Mucosa of descending colon (tissue), 3 donors: ENCODE measurements at regions of chr4 and their contacts with region 1.

Region 1: DNA sequence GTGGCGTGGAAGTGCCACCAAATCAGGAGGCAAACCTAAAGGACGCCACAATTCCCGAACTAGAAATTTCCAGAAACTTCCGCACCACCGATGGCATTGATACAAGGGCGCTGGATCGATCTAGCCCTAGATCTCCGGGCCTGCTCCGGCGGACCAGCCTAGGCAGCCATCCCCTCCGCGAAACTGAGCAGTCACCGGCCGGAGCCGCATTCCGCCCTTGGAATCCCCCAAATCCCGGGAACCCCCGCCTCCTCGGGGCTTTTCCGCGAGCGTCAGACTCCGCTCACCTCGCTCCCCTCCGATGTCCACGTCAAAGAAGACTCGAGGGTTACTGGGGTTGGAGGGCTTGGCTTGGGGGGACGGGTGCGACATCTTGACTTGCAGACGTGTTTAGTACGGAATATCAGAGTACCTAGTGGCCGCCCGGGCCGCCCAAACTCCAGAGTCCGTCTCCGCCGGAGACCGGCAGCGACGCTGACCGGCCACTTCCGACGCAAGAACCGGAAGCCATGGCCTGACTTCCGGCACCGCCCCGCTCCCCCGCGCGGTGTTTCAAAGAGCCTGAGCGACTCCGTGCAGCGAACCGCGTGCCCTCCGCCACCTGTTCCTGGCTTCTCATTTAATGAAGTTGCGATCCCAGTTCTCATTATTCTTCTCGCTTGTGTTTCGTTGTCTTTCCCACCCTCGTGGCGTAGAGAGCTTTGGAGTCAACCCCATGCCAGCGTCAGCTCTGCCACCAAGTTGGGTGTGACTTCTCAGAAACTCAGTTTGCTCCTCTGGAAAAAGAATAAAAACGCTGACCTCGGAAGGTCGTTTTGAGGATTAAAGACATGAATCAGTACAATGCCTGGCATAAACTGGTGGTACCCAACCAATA is at the start of gene PPID:
- DNase-seq: peak; percentile 92 to 93 (median 93)
- ATAC-seq: peak; percentile 99
- H3K4me3 ChIP-seq: peak within 1 kb of the TSS; percentile 78
- H3K4me1 ChIP-seq: no peaks in the 10 kb centered on the region
- CTCF ChIP-seq: no peak
- total RNA-seq, gene PPID: 19.7 to 23.9 (median 22.2) TPM

Region 2: DNA sequence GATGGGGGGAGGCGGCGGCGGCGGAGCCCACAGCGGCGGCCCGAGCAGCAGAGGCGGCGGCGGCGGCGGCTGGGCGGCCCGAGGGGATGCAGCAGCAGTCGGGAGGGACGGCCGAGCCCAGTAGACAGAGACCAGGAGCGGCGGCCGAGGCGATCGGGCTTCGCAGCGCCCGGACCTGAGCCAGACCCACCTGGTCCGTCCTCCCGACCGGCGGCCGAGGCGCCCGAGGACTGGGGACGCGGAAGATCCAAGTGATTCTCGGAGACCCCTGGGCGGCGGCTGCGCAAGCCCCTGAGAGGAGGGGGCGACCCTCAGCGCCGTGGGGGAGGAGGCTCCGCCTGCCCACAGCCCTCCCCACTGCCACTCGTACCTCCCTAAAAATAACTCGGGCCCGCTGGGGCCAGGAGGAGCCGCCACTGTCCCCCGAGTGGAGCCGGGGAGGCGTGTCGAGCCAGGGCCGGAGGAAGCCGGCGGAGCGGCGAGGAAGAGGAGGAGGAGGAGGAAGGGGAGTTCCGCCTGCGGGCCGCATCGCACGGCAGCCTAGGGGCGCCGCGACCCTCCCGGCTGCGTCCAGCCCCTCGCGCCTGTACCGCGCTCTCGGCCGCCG is 380.3 kb after region 1 on chr4:
- intact Hi-C with region 1: no loop called
- DNase-seq: peak; percentile 56 to 76 (median 75)
- ATAC-seq: peak; percentile 19
- H3K4me3 ChIP-seq: peak overlapping the region; percentile 79
- H3K4me1 ChIP-seq: peaks cover 22% of the 10 kb centered on the region
- CTCF ChIP-seq: no peak

Region 3: GRCh38 chr4:159206427-159206871 is 483.3 kb after region 1 on chr4:
- intact Hi-C with region 1: loop called in 1 of 2 experiments (anchors 10 kb)
- DNase-seq: no peak
- ATAC-seq: no peak
- H3K4me3 ChIP-seq: no peak overlapping the region
- H3K4me1 ChIP-seq: no peaks in the 10 kb centered on the region
- CTCF ChIP-seq: no peak